ENCODE measurements at regions of chr2 and their contacts with region 1.

Region 1: GRCh38 chr2:112626604-112627059 is 19.1 kb upstream of the SLC20A1 start:
- DNase-seq: peak; percentile 79
- H3K4me3 ChIP-seq: peak overlapping the region; percentile 37 to 57
- H3K27ac ChIP-seq: peak overlapping the region; percentile 62 to 94
- H3K4me1 ChIP-seq: peaks cover 21 to 49% of the 10 kb centered on the region in 2 experiments; a peak in 3 of 4 replicates
- H3K27me3 ChIP-seq: no peaks in the 10 kb centered on the region
- CTCF ChIP-seq: peak; percentile 95
- EP300 ChIP-seq: peak in 1 of 2 experiments; percentile 37; a peak in 1 of 4 replicates
- RAD21 ChIP-seq: peak; percentile 82

Region 2: GRCh38 chr2:112645310-112646101 is 18.9 kb after region 1 on chr2 and contains the start of gene SLC20A1:
- CTCF ChIA-PET with region 1: interaction called, 26 read pairs
- POLR2A ChIA-PET with region 1: interaction called, 8 read pairs
- DNase-seq: peak; percentile 99
- H3K4me3 ChIP-seq: peak within 1 kb of the TSS; percentile 62 to 76
- H3K27ac ChIP-seq: peak within 1 kb of the TSS; percentile 87 to 93
- H3K4me1 ChIP-seq: peaks cover 22 to 49% of the 10 kb centered on the region in 2 experiments
- H3K27me3 ChIP-seq: no peaks in the 10 kb centered on the region
- CTCF ChIP-seq: peak; percentile 43
- EP300 ChIP-seq: no peak
- RAD21 ChIP-seq: no peak
- polyA plus RNA-seq, gene SLC20A1: 56.3 and 62.0 TPM in 2 replicates

Region 3: GRCh38 chr2:112666764-112667122 is 40.1 kb after region 1 on chr2:
- CTCF ChIA-PET with region 1: interaction called, 13 read pairs
- POLR2A ChIA-PET with region 1: no interaction called
- DNase-seq: no peak
- H3K4me3 ChIP-seq: no peak overlapping the region
- H3K27ac ChIP-seq: no peak overlapping the region
- H3K4me1 ChIP-seq: no peaks in the 10 kb centered on the region; a peak in 1 of 4 replicates
- H3K27me3 ChIP-seq: no peaks in the 10 kb centered on the region
- CTCF ChIP-seq: no peak
- EP300 ChIP-seq: no peak
- RAD21 ChIP-seq: no peak

Region 4: DNA sequence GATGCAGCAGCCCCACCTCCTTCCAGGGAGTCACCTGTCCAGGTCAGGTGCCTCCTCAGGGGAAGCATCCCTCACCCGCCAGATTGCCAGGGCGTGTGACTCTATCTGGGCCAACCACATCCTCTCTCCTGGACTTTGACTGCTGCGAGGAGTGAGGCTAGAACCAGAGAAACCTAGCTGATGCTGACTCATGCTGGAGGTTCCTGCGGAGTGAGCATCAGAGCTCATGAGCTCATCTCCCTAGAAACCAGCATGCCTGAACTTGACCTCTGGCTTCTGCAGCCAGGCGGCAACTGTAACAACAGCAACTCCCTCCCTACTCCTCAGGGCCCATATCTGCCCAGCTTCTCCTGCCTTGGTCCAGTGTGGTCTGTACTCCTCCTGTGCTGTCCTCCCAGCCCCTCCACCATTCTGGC is 65.9 kb after region 1 on chr2:
- CTCF ChIA-PET with region 1: interaction called, 28 read pairs
- POLR2A ChIA-PET with region 1: interaction called, 3 read pairs
- DNase-seq: no peak
- H3K4me3 ChIP-seq: no peak overlapping the region
- H3K27ac ChIP-seq: peak overlapping the region in 1 of 2 experiments; percentile 73; a peak in 2 of 4 replicates
- H3K4me1 ChIP-seq: peaks cover 5 to 21% of the 10 kb centered on the region in 2 experiments; a peak in 3 of 4 replicates
- H3K27me3 ChIP-seq: no peaks in the 10 kb centered on the region
- CTCF ChIP-seq: no peak
- EP300 ChIP-seq: no peak; a peak in 1 of 4 replicates
- RAD21 ChIP-seq: no peak

Measured in SK-N-SH (cell line).